ENCODE measurements at regions of chr4 and their contacts with region 1.

Region 1: GRCh38 chr4:39527273-39528060 is at the start of gene UGDH:
- DNase-seq: peak; percentile 98
- H3K4me3 ChIP-seq: peak within 1 kb of the TSS; percentile 85 to 98 (median 92)
- H3K27ac ChIP-seq: peak within 1 kb of the TSS; percentile 86 to 93 (median 91)
- H3K4me1 ChIP-seq: peaks cover 0 to 34% (median 26%) of the 10 kb centered on the region in 6 donors
- H3K27me3 ChIP-seq: no peaks in the 10 kb centered on the region
- CTCF ChIP-seq: peak in 3 of 11 experiments; percentile 9 to 49 (median 26)
- POLR2A ChIP-seq: peak in 2 of 3 donors; percentile 12 to 57
- total RNA-seq, gene UGDH: 15.3 to 30.8 (median 19.2) TPM

Region 2: DNA sequence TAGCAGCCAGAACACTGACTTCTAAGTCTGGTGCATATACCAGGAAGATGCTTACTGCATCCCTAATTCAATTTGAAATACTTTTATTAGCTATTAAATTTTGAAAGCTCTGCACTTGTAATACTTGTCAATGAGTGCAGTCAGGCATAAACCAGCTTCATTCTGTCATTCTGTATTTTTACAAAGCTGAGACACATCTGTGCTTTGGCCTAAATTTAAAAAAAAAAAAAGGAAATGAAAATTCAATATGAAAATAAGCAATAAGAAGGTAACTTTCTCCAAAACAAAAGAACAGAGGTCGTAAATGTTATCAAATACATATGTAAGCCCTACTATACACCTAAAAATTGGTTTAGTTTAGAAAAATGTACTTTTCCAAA is 104.2 kb after region 1 on chr4:
- intact Hi-C with region 1: loop called (anchors 5 kb)
- DNase-seq: no peak
- H3K4me3 ChIP-seq: peak overlapping the region in 2 of 8 donors; percentile 13 to 26
- H3K27ac ChIP-seq: peak overlapping the region; percentile 5 to 81 (median 70)
- H3K4me1 ChIP-seq: peaks cover 20 to 99% (median 51%) of the 10 kb centered on the region in 6 donors
- H3K27me3 ChIP-seq: no peaks in the 10 kb centered on the region
- CTCF ChIP-seq: no peak
- POLR2A ChIP-seq: no peak

Measured in spleen (tissue), 13 donors.